ENCODE measurements at regions of chr1 and their contacts with region 1.

Region 1: DNA sequence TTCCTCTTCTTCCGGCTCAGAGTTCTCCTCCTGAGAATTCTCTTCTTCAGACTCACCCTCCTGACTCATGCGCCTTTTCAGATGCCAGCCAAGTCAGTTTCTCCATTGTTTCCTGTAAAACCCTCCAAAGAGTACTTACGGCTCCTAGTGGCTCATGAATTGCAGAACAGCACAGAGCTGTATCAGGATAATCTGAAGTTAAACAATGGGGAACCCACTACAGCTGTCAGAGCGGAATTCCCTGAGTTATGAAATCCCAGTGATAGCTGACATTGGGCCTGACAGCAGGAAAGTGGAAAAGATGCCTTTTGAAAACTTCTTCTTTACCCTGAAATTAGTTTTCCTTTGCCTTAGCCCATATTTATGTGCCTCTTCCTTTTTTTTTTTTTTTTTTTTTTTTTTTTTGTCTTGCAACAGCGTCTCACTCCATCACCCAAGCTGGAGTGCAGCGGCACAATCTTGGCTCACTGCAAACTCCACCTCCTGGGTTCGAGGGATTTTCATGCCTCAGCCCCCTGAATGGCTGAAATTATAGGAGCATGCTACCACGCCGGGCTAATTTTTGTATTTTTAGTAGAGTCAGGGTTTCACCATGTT is 38.6 kb downstream of the MSTO1 start:
- DNase-seq: peak; percentile 51 to 93
- H3K4me3 ChIP-seq: peak overlapping the region; percentile 58; the same call in 1 of the 2 replicates
- H3K27ac ChIP-seq: peak overlapping the region; percentile 83
- H3K4me1 ChIP-seq: peaks cover 31% of the 10 kb centered on the region
- H3K27me3 ChIP-seq: no peaks in the 10 kb centered on the region
- CTCF ChIP-seq: peak; percentile 61; the same call in 1 of the 2 replicates

Region 2: GRCh38 chr1:155250633-155251449 is 397.8 kb before region 1 on chr1:
- CTCF ChIA-PET with region 1: interaction called, 18 read pairs
- POLR2A ChIA-PET with region 1: no interaction called
- intact Hi-C with region 1: no loop called
- DNase-seq: peak; percentile 70 to 88
- H3K4me3 ChIP-seq: no peak overlapping the region
- H3K27ac ChIP-seq: no peak overlapping the region
- H3K4me1 ChIP-seq: peaks cover 13% of the 10 kb centered on the region
- H3K27me3 ChIP-seq: no peaks in the 10 kb centered on the region
- CTCF ChIP-seq: peak; percentile 96

Region 3: DNA sequence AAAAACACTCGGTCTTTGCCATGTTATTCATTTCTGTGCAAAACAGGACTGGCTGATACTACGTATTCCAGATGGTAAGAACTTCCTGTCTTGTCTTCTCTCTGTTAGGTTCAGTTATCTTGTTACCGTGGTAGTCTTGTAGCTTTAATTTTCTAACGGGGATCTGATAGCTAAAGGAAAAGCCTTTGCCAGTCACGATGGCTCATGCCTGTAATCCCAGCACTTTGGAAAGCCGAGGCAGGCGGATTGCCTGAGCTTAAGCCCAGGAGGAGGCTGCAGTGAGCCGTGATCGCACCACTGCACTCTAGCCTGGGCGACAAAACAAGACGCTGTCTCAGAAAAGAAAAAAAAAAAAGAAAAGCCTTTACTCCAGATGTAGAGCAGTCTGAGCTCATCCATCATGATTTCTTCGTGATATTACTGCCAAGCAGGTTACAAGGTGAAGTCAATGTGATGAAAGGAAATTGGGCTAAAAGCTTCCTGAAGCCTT is 49.8 kb before region 1 on chr1:
- CTCF ChIA-PET with region 1: interaction called, 15 read pairs
- POLR2A ChIA-PET with region 1: no interaction called
- intact Hi-C with region 1: no loop called
- DNase-seq: no peak
- H3K4me3 ChIP-seq: no peak overlapping the region
- H3K27ac ChIP-seq: no peak overlapping the region
- H3K4me1 ChIP-seq: no peaks in the 10 kb centered on the region
- H3K27me3 ChIP-seq: no peaks in the 10 kb centered on the region
- CTCF ChIP-seq: no peak

Region 4: DNA sequence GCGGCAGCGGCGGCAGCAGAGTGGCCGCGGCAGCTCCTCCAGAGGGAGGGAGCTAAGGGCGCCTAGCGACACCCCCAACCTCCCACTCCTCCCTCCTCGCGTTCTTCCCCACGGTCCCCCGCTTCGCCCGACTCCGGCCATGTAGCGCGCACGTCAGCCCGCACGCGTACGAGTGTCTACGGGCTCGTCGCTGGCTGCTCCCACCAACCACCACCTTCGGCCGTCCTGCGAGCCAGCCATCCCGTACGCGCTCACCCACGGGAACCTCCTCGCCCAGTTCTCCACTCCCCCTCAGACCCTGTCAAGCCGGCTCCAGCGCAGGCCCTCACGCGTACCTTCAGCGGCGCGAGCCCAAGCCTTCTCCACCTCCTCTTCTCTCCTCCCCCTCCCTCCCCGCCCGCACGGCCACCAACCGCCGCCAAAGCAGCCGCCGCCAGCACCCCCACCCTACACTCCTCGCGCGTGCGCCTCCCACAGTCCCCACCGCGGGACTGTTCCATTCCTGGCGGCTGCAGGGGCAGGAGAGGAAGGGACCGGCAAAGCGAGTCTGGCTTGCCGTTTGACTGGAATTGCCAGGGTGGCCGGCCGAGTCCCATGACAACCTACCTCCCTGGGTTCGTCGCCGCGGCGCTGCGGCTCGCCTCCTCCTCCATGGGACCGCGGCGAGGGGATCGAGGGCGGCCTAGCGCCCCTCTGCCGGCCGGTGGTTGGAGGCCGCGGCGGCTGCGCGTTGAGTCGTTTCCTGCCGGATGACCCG is 39.9 kb after region 1 on chr1 and contains the start of gene YY1AP1:
- CTCF ChIA-PET with region 1: no interaction called
- POLR2A ChIA-PET with region 1: no interaction called
- intact Hi-C with region 1: loop called (anchors 2 kb)
- DNase-seq: peak; percentile 59 to 91
- H3K4me3 ChIP-seq: peak within 1 kb of the TSS; percentile 88
- H3K27ac ChIP-seq: peak within 1 kb of the TSS; percentile 94
- H3K4me1 ChIP-seq: peaks cover 16% of the 10 kb centered on the region
- H3K27me3 ChIP-seq: no peaks in the 10 kb centered on the region
- CTCF ChIP-seq: no peak
- total RNA-seq, gene YY1AP1: 38.3 and 40.6 TPM in 2 replicates

Measured in PC-9 (cell line).